GM10248 (cell line): ENCODE measurements at regions of chr11 and their contacts with region 1.

Region 1: GRCh38 chr11:66386171-66387069 is 14.9 kb upstream of the SLC29A2 start:
- DNase-seq: peak; percentile 69
- CTCF ChIP-seq: peak; percentile 93

Region 2: GRCh38 chr11:66311965-66312548 is 74.4 kb before region 1 on chr11:
- CTCF ChIA-PET with region 1: interaction called, 47 read pairs
- POLR2A ChIA-PET with region 1: no interaction called
- DNase-seq: peak; percentile 87
- CTCF ChIP-seq: peak; percentile 16

Region 3: GRCh38 chr11:66363805-66364535 is 22.4 kb before region 1 on chr11:
- CTCF ChIA-PET with region 1: interaction called, 38 read pairs
- POLR2A ChIA-PET with region 1: interaction called, 4 read pairs
- DNase-seq: peak; percentile 83
- CTCF ChIP-seq: peak; percentile 90

Region 4: DNA sequence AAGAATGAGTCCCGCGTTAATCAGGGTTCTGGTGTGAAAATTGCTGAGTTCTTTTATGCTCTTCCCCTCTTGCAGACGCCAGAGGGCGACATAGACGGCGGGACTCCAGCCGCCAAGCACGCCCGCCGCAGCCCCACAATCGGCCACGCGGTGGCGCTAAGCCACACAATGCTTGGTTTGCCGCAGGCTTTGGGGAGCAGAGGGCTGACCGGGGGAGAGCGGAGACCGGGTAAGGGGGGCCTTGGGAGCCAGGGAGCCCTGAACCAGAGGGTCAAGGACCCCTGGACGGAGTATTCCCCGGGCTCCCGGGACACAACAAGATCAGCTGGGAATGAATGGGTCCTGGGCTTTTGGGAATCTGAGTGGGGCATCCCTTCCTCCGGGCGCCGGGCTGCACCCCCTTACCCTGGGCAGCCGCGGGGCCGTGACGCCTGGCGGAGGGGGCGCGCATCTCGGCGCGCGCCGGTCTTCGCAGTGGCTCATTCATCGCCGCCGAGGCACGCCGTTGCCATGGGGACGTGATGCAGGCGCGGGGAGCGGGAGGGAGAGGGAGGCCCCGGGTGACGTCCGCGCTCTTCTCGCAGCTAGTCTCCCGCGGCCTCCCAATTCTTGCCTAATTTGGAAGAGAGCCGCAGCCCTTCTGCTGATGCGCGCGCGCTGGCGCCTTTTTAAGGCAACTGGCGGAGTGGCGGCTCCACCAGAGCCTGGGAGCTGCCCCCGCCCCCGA is 22.2 kb after region 1 on chr11:
- CTCF ChIA-PET with region 1: interaction called, 40 read pairs
- POLR2A ChIA-PET with region 1: no interaction called
- DNase-seq: peak; percentile 95
- CTCF ChIP-seq: peak; percentile 100

Region 5: GRCh38 chr11:66429983-66430602 is 43.7 kb after region 1 on chr11:
- CTCF ChIA-PET with region 1: interaction called, 16 read pairs
- POLR2A ChIA-PET with region 1: no interaction called
- DNase-seq: peak; percentile 78
- CTCF ChIP-seq: peak; percentile 83

Region 6: DNA sequence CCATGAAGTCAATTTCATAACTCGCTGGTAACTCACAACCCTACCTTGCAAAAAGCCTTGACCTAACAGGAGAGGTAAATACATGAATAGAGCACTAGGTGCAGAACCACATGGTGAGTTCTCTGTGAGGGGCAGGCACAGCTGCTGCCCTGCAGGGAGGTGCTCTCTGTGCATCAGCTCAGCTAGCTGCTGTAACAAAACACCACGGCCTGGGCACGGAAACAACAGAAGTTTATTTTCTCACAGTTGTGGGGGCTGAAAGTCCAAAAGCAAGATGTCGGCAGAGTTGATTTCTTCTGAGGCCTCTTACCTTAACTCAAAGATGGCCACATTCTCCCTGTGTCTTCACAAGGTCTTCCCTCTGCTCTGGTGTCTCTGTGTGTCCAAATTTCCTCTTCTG is 65.2 kb after region 1 on chr11:
- CTCF ChIA-PET with region 1: no interaction called
- POLR2A ChIA-PET with region 1: no interaction called
- DNase-seq: no peak
- CTCF ChIP-seq: no peak